BJ (cell line): ENCODE measurements at regions of chr13 and their contacts with region 1.

Region 1: GRCh38 chr13:106373989-106374572 is 161.4 kb downstream of the EFNB2 start:
- DNase-seq: no peak
- H3K4me3 ChIP-seq: no peak overlapping the region
- H3K27me3 ChIP-seq: no peaks in the 10 kb centered on the region
- CTCF ChIP-seq: no peak

Region 2: GRCh38 chr13:105994340-105994739 is 379.7 kb before region 1 on chr13:
- CTCF ChIA-PET with region 1: no interaction called
- POLR2A ChIA-PET with region 1: interaction called, 12 read pairs
- DNase-seq: no peak
- H3K4me3 ChIP-seq: no peak overlapping the region
- H3K27me3 ChIP-seq: no peaks in the 10 kb centered on the region
- CTCF ChIP-seq: no peak

Region 3: GRCh38 chr13:106274551-106275203 is 99.4 kb before region 1 on chr13:
- CTCF ChIA-PET with region 1: no interaction called
- POLR2A ChIA-PET with region 1: no interaction called
- DNase-seq: no peak
- H3K4me3 ChIP-seq: no peak overlapping the region
- H3K27me3 ChIP-seq: no peaks in the 10 kb centered on the region
- CTCF ChIP-seq: no peak

Region 4: GRCh38 chr13:106385654-106386053 is 11.6 kb after region 1 on chr13:
- CTCF ChIA-PET with region 1: no interaction called
- POLR2A ChIA-PET with region 1: no interaction called
- DNase-seq: no peak
- H3K4me3 ChIP-seq: no peak overlapping the region
- H3K27me3 ChIP-seq: 0 out of 2 replicates have a peak, but pooled peaks cover 1% of the 10 kb centered on the region
- CTCF ChIP-seq: no peak

Region 5: DNA sequence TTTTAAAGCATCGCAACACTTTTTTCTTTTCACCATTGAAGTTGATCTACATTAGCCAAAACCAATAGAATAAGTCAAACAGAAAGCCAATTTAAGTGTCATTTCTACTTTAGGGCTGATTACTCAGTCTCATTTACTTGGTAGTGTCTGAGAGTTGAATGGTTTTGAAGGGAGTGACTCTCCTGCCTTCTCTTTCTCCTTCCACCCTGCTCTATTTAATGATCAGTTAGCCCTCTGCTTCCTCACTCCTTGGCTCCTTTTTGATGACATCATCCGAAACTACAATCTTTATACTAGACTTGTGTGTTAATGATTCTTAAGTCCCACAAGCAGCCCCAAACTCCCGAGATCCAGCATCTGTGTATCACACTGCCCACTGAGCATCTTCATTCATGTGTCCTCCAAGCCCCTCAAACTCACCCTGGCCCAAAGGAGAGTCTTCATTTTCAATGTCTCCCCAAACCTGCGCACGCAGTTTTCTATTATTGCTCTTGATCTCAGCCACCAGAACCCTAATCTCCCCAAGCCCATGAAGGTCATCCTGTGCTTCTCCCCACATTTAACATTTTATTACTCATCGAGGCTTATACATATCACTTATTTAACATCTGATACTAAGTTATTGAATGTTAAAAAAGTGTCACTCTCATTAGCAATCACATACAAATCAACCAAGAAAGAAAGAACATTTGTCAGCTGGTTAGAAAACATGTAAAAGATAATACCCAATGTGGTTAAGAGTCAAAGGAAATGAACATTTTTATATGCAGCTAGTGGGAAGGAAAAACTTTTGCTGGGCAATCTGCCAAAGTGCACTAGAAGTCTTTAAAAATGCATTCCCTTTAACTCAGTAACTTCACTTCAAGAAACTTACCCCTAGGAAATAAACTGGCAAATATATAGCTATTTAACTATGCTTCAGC is 226.1 kb after region 1 on chr13:
- CTCF ChIA-PET with region 1: no interaction called
- POLR2A ChIA-PET with region 1: no interaction called
- DNase-seq: peak; percentile 39
- H3K4me3 ChIP-seq: no peak overlapping the region
- H3K27me3 ChIP-seq: no peaks in the 10 kb centered on the region
- CTCF ChIP-seq: no peak